ENCODE measurements at regions of chr17 and their contacts with region 1.

Region 1: GRCh38 chr17:16453493-16453851 is 38.1 kb downstream of the TRPV2 start:
- DNase-seq: no peak
- H3K4me3 ChIP-seq: no peak overlapping the region
- H3K27ac ChIP-seq: peak overlapping the region; percentile 31
- H3K27me3 ChIP-seq: no peaks in the 10 kb centered on the region
- CTCF ChIP-seq: no peak

Region 2: DNA sequence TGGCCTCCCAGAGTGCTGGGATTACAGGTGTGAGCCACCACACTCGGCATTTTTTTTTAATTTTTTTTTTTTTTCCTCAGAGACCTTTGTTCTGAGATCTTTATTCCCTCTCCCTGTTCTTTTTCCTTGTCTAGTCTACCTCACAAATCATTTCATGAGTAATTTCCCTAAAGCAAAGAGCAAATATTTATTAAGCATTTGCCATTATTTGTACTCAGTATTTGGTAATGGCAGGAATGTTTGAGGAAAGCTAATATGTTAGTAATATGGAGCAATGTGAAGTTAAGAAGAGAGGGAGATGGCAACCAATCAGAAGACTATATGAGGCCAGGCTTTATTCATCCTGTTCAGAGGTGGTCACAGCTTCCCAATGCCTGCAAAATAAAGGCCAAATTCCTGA is 113.5 kb before region 1 on chr17:
- CTCF ChIA-PET with region 1: no interaction called
- POLR2A ChIA-PET with region 1: no interaction called
- DNase-seq: no peak
- H3K4me3 ChIP-seq: no peak overlapping the region
- H3K27ac ChIP-seq: no peak overlapping the region
- H3K27me3 ChIP-seq: no peaks in the 10 kb centered on the region
- CTCF ChIP-seq: no peak

Region 3: GRCh38 chr17:16463358-16464302 is 10.2 kb after region 1 on chr17:
- CTCF ChIA-PET with region 1: interaction called, 52 read pairs
- POLR2A ChIA-PET with region 1: no interaction called
- DNase-seq: peak; percentile 50
- H3K4me3 ChIP-seq: no peak overlapping the region
- H3K27ac ChIP-seq: peak overlapping the region; percentile 75
- H3K27me3 ChIP-seq: no peaks in the 10 kb centered on the region
- CTCF ChIP-seq: peak; percentile 47

Region 4: DNA sequence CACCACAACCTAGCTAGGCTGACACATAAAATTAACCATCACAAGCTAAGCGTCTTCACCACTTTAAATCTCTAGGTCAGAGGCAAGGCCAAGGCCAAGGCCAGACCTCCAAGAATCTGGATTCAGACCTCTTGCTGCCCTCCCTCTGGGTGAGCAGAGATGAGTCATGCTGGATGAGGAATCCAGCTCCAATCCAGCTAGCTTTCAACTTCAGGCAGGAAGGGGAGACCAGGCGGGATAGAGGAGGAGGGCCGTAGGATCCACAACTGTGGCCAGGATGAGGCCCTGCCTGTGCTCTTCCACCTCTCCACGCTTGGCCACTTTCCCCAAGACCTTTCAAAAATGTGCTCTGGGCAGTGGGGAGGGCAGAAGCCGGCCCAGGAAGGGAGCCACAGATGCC is 23.8 kb after region 1 on chr17:
- CTCF ChIA-PET with region 1: interaction called, 11 read pairs
- POLR2A ChIA-PET with region 1: interaction called, 5 read pairs
- DNase-seq: peak; percentile 58
- H3K4me3 ChIP-seq: no peak overlapping the region
- H3K27ac ChIP-seq: peak overlapping the region; percentile 87
- H3K27me3 ChIP-seq: no peaks in the 10 kb centered on the region
- CTCF ChIP-seq: no peak